ENCODE measurements at regions of chr6 and their contacts with region 1.

Region 1: GRCh38 chr6:119349323-119350042 is at the start of gene MAN1A1:
- DNase-seq: peak; percentile 87
- ATAC-seq: peak; percentile 89
- H3K4me3 ChIP-seq: peak within 1 kb of the TSS; percentile 89 to 99 (median 99)
- H3K27ac ChIP-seq: peak within 1 kb of the TSS; percentile 100
- H3K4me1 ChIP-seq: peaks cover 24% of the 10 kb centered on the region
- H3K27me3 ChIP-seq: no peaks in the 10 kb centered on the region; a peak in 1 of 5 replicates
- CTCF ChIP-seq: peak; percentile 51
- EP300 ChIP-seq: peak; percentile 30 to 52; a peak in 2 of 4 replicates
- POLR2A ChIP-seq: peak; percentile 98 to 100
- RAD21 ChIP-seq: peak; percentile 28; the same call in 1 of the 2 replicates
- total RNA-seq, gene MAN1A1: 98.7 and 156 TPM in 2 replicates

Region 2: GRCh38 chr6:119147101-119148053 is 202.1 kb before region 1 on chr6:
- CTCF ChIA-PET with region 1: no interaction called
- POLR2A ChIA-PET with region 1: interaction called, 16 read pairs
- in situ Hi-C with region 1: loop called (anchors 5 kb)
- intact Hi-C with region 1: loop called (anchors 2 kb)
- DNase-seq: peak; percentile 92
- ATAC-seq: peak; percentile 82
- H3K4me3 ChIP-seq: no peak overlapping the region
- H3K27ac ChIP-seq: peak overlapping the region; percentile 46
- H3K4me1 ChIP-seq: peaks cover 59% of the 10 kb centered on the region
- H3K27me3 ChIP-seq: no peaks in the 10 kb centered on the region
- CTCF ChIP-seq: no peak
- EP300 ChIP-seq: peak in 1 of 2 experiments; percentile 85; a peak in 2 of 4 replicates
- POLR2A ChIP-seq: no peak
- RAD21 ChIP-seq: no peak

Region 3: GRCh38 chr6:119261945-119262286 is 87.6 kb before region 1 on chr6:
- CTCF ChIA-PET with region 1: no interaction called
- POLR2A ChIA-PET with region 1: interaction called, 24 read pairs
- in situ Hi-C with region 1: no loop called
- intact Hi-C with region 1: loop called (anchors 1 kb)
- DNase-seq: peak; percentile 72
- ATAC-seq: peak; percentile 69
- H3K4me3 ChIP-seq: no peak overlapping the region; a peak in 1 of 6 replicates
- H3K27ac ChIP-seq: peak overlapping the region; percentile 80
- H3K4me1 ChIP-seq: peaks cover 86% of the 10 kb centered on the region
- H3K27me3 ChIP-seq: no peaks in the 10 kb centered on the region
- CTCF ChIP-seq: peak; percentile 54
- EP300 ChIP-seq: no peak
- POLR2A ChIP-seq: no peak
- RAD21 ChIP-seq: 0 out of 2 replicates have a peak, but pooled peaks have one; percentile 27

Region 4: DNA sequence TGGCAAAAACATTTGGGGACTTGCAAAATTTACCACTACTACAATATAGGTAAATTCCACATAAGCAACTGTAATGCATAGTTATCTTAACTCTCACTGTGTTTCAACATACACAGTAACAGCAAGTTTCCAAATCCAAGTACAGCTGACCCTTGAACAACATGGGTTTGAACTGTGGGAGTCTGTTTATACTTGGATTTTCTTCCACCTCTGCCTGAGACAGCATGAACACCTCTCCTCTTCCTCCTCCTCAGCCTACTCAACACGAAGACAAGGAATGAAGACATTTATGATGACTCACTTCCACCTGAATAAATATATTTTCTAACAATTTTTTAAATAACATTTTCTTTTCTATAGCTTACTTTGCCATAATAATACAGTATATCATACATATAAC is 25.6 kb before region 1 on chr6:
- CTCF ChIA-PET with region 1: no interaction called
- POLR2A ChIA-PET with region 1: interaction called, 15 read pairs
- in situ Hi-C with region 1: no loop called
- intact Hi-C with region 1: no loop called
- DNase-seq: peak; percentile 43
- ATAC-seq: peak; percentile 56
- H3K4me3 ChIP-seq: no peak overlapping the region
- H3K27ac ChIP-seq: peak overlapping the region; percentile 56
- H3K4me1 ChIP-seq: peaks cover 93% of the 10 kb centered on the region
- H3K27me3 ChIP-seq: no peaks in the 10 kb centered on the region
- CTCF ChIP-seq: no peak
- EP300 ChIP-seq: no peak; a peak in 1 of 4 replicates
- POLR2A ChIP-seq: no peak
- RAD21 ChIP-seq: no peak

Region 5: GRCh38 chr6:119495230-119495683 is 145.8 kb after region 1 on chr6:
- CTCF ChIA-PET with region 1: no interaction called
- POLR2A ChIA-PET with region 1: interaction called, 4 read pairs
- in situ Hi-C with region 1: no loop called
- intact Hi-C with region 1: loop called (anchors 5 kb)
- DNase-seq: peak; percentile 2
- ATAC-seq: peak; percentile 41
- H3K4me3 ChIP-seq: no peak overlapping the region
- H3K27ac ChIP-seq: no peak overlapping the region
- H3K4me1 ChIP-seq: peaks cover 50% of the 10 kb centered on the region
- H3K27me3 ChIP-seq: no peaks in the 10 kb centered on the region
- CTCF ChIP-seq: no peak
- EP300 ChIP-seq: no peak
- POLR2A ChIP-seq: no peak
- RAD21 ChIP-seq: no peak

Region 6: DNA sequence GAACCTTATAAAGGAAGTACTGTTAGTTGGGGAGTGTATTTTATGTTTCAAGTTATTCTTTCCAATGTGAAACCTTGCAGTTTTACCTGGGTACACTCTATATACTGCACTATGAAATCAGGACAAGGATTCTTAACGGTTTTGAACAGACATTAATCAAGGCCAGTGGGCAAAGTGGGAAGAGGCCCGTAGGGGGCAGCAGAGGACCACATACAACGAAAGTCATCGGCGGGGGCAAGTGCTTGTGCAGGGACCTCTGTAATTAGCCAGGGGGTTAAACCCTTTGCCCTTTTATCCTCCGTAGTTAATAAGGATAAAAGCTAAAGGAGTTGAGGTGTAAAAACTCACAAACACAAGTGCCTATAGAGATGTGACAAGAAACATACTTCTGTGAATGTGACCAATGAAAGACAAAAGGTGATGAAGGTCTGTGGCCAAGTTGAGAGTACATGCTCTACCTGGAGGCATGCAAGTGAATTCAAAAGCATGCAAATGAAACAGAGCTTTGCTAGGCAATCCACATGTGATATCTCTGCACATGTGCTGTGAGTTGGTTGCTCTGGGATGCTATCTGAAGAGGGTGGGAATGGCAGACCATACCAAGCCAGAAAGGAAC is 392.8 kb after region 1 on chr6:
- CTCF ChIA-PET with region 1: no interaction called
- POLR2A ChIA-PET with region 1: no interaction called
- in situ Hi-C with region 1: loop called (anchors 10 kb)
- intact Hi-C with region 1: loop called (anchors 1 kb)
- DNase-seq: peak; percentile 54
- ATAC-seq: peak; percentile 99
- H3K4me3 ChIP-seq: no peak overlapping the region
- H3K27ac ChIP-seq: no peak overlapping the region
- H3K4me1 ChIP-seq: no peaks in the 10 kb centered on the region
- H3K27me3 ChIP-seq: no peaks in the 10 kb centered on the region
- CTCF ChIP-seq: peak; percentile 92
- EP300 ChIP-seq: no peak
- POLR2A ChIP-seq: no peak
- RAD21 ChIP-seq: peak; percentile 83

Region 7: DNA sequence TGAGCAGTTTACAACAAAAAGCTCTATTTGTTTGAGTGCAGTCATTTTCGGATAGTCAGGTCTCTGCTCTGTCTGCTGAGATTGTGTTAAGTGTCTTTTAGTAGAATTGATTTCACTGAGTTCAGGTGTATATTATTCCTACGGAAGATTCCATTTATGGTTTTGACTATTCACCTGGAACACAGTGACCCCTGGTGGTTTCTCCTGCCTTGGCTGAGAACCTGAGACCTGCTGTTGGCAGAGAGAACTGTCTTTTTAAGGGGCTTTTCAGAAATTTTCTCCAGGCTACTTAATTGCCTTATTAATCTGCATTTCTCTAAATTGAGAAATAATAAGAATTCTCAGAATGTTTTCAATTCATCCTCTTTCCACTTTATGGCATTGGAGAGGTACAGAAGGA is 1476.8 kb after region 1 on chr6:
- CTCF ChIA-PET with region 1: no interaction called
- POLR2A ChIA-PET with region 1: no interaction called
- in situ Hi-C with region 1: no loop called
- intact Hi-C with region 1: loop called (anchors 10 kb)
- DNase-seq: peak; percentile 52
- ATAC-seq: peak; percentile 97
- H3K4me3 ChIP-seq: no peak overlapping the region
- H3K27ac ChIP-seq: no peak overlapping the region
- H3K4me1 ChIP-seq: no peaks in the 10 kb centered on the region
- H3K27me3 ChIP-seq: no peaks in the 10 kb centered on the region
- CTCF ChIP-seq: peak; percentile 73
- EP300 ChIP-seq: no peak
- POLR2A ChIP-seq: no peak
- RAD21 ChIP-seq: peak; percentile 44; the same call in 1 of the 2 replicates

Measured in HepG2 (cell line).